ENCODE measurements at regions of chr15 and their contacts with region 1.

Region 1: DNA sequence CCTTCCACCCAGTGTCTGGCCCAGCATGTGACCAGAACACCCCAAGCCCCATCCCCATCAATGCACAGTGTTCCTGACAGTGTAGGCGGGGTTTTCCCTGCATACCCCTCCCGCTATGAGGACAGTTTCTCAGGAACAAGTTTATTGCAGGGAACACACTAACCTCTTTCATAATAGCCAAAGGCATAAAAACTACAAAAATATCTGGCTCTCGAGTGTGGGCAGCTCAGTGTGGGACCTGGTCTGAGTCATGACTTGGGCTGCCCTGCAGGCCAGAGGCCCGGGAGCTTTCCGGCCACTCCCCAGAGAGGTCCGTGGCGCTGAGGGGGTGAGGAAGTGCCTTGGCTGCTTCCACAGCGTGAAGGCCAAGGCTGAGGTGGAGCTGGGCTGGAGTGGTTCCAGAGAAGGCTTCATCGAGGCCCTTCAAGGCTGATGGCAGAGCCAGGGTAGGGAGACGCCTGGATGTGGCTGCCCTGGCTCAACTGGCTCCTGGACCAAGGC is 5.9 kb downstream of the ISLR start:
- DNase-seq: peak; percentile 83 to 97
- H3K4me3 ChIP-seq: no peak overlapping the region
- H3K27ac ChIP-seq: peak overlapping the region; percentile 82 to 85
- H3K4me1 ChIP-seq: peaks cover 42 to 59% of the 10 kb centered on the region in 2 donors
- H3K27me3 ChIP-seq: no peaks in the 10 kb centered on the region
- CTCF ChIP-seq: no peak

Region 2: GRCh38 chr15:74240002-74240568 is 60.7 kb after region 1 on chr15:
- intact Hi-C with region 1: loop called (anchors 2 kb)
- DNase-seq: peak; percentile 47 to 91
- H3K4me3 ChIP-seq: no peak overlapping the region
- H3K27ac ChIP-seq: peak overlapping the region; percentile 36 to 51
- H3K4me1 ChIP-seq: peaks cover 20 to 32% of the 10 kb centered on the region in 2 donors
- H3K27me3 ChIP-seq: no peaks in the 10 kb centered on the region
- CTCF ChIP-seq: peak; percentile 60 to 63 (median 63)

Region 3: DNA sequence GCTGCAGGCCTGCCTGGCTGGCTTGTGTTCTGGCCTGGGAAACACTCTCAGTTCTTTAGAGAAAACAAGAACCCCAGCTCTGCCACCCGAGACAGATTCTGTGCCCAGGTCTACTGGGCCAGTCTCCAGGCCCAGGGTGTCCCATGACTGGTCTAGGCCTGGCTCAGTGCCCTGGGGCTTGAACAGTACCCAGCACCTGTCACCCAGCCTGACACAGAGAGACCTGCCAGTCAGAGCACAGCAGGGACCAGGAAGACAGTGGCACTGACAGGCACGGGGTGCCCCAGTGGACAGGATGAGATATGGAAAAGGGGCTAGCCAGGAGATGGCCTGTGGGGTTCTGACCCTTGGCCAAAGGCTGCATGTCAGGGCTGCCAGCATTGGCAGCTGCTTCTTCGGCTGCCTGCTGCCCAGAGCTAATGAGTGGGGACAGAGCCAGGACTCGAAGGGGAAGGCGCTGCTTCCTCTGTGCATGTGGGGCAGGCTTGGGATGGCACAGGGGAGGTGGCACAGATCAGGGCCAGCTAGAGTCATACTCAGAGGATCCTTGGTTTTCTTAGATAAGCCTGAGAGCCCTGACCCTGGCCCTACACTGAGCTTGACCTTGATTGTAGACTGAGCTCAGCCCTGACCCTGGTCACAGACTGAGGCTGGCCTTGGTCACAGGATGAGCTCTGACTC is 71.9 kb after region 1 on chr15:
- intact Hi-C with region 1: no loop called
- DNase-seq: peak; percentile 65 to 84
- H3K4me3 ChIP-seq: no peak overlapping the region
- H3K27ac ChIP-seq: peak overlapping the region; percentile 55 to 67
- H3K4me1 ChIP-seq: peaks cover 3 to 23% of the 10 kb centered on the region in 2 donors
- H3K27me3 ChIP-seq: no peaks in the 10 kb centered on the region
- CTCF ChIP-seq: no peak